ENCODE measurements at regions of chr16 and their contacts with region 1.

Region 1: GRCh38 chr16:87765776-87766484 is at the start of gene KLHDC4:
- DNase-seq: peak; percentile 76 to 96 (median 92)

Region 2: GRCh38 chr16:87586201-87586782 is 179.6 kb before region 1 on chr16:
- intact Hi-C with region 1: loop called (anchors 5 kb)
- DNase-seq: no peak